ENCODE measurements at regions of chr2 and their contacts with region 1.

Region 1: GRCh38 chr2:98091738-98092137 is 4.8 kb downstream of the VWA3B start:
- DNase-seq: no peak
- ATAC-seq: no peak
- H3K4me3 ChIP-seq: no peak overlapping the region
- H3K4me3 Mint-ChIP-seq: no peak overlapping the region
- H3K27ac ChIP-seq: no peak overlapping the region
- H3K27ac Mint-ChIP-seq: no peak overlapping the region
- H3K4me1 ChIP-seq: peaks cover 7% of the 10 kb centered on the region
- H3K4me1 Mint-ChIP-seq: peaks cover 2% of the 10 kb centered on the region
- H3K27me3 ChIP-seq: peaks cover 8 to 11% of the 10 kb centered on the region in 2 experiments
- H3K27me3 Mint-ChIP-seq: peaks cover 16% of the 10 kb centered on the region
- CTCF ChIP-seq: no peak

Region 2: DNA sequence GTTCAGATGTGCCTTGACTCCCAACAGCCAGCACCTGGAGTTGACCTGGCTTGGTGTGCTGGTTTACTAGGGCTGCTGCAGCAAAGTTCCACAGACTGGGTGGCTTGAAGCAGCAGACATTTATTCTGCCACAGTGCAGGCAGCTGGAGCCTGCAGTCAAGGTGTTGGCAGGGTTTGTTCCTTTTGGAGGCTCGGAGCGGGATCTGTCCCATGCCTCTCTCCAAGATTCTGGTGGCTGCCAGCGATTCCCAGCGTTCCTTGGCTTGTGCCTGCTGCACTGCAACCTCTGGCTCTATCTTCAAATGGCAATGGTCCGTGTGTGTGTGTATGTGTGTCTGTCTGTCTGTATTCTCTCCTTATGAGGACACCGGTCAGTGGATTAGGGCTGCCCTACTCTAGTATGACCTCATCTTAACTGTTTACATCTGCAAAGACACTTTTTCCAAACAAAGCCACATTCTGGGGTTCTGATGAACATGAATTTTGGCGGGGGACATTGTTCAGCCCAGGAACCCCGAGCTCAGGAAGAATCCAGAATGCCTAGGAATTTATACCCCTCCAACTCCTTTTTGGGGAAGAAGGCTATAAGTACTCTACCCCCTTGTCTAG is 51.3 kb before region 1 on chr2:
- CTCF ChIA-PET with region 1: no interaction called
- POLR2A ChIA-PET with region 1: no interaction called
- intact Hi-C with region 1: loop called in 1 of 2 experiments (anchors 5 kb)
- DNase-seq: peak in 1 of 9 experiments; percentile 25
- ATAC-seq: no peak
- H3K4me3 ChIP-seq: no peak overlapping the region
- H3K4me3 Mint-ChIP-seq: no peak overlapping the region
- H3K27ac ChIP-seq: no peak overlapping the region
- H3K27ac Mint-ChIP-seq: no peak overlapping the region
- H3K4me1 ChIP-seq: no peaks in the 10 kb centered on the region
- H3K4me1 Mint-ChIP-seq: no peaks in the 10 kb centered on the region
- H3K27me3 ChIP-seq: no peaks in the 10 kb centered on the region
- H3K27me3 Mint-ChIP-seq: peaks cover 11% of the 10 kb centered on the region
- CTCF ChIP-seq: no peak